ENCODE measurements at regions of chr12 and their contacts with region 1.

Region 1: GRCh38 chr12:119780786-119781434 is 96.2 kb downstream of the CIT start:
- DNase-seq: no peak
- H3K4me3 ChIP-seq: peak overlapping the region; percentile 33
- H3K27me3 ChIP-seq: no peaks in the 10 kb centered on the region
- CTCF ChIP-seq: peak; percentile 84

Region 2: GRCh38 chr12:119642986-119643385 is 137.9 kb before region 1 on chr12:
- CTCF ChIA-PET with region 1: no interaction called
- POLR2A ChIA-PET with region 1: no interaction called
- DNase-seq: no peak
- H3K4me3 ChIP-seq: no peak overlapping the region
- H3K27me3 ChIP-seq: no peaks in the 10 kb centered on the region
- CTCF ChIP-seq: no peak

Region 3: DNA sequence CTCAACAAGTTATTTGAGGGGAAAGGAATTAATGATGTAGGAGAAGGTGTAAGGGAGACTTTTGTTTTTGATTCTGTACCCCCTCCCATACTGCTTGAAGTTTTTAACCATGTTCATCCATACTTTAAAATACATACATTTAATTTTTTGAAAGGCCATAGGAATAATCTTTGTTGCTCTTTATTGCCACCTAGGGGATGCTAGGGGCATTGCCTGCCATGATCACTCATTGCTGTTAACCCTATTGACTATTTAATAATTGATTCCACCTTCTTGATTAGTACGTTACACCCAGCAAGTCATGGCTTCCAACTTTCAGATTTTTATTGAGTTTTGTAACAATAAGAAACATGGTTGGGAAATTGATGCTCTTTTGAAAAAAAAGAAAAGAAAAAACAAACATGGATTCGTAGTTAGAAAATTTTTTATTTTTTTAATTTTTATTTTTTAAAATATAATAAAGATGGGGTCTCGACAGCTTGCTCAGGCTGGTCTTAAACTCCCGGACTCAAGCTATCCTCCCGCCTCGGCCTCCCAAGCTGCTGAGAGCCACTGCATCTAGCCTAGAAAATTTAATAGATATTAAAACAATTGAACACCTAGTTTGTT is 121.5 kb before region 1 on chr12:
- CTCF ChIA-PET with region 1: interaction called, 17 read pairs
- POLR2A ChIA-PET with region 1: no interaction called
- DNase-seq: no peak
- H3K4me3 ChIP-seq: no peak overlapping the region
- H3K27me3 ChIP-seq: no peaks in the 10 kb centered on the region
- CTCF ChIP-seq: peak; percentile 92

Region 4: DNA sequence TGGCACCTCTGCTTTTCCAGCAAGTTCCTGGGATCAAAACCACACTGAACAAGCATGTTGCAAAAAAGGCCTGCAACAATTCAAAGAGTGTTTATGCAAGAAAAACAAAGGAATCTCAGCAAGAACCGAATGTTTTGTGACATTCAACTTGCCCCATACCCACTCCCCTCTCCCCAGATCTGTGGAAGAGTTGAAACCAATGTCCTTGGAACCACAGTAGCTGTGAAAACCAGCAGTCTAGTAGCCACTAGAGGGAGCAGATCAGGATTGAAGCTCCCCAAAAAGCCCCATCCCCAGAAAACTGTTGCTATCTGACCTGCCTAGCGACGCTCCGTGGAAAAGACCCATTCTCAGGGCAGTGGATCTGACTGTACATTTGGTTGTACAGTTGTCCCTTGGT is 85.9 kb before region 1 on chr12:
- CTCF ChIA-PET with region 1: interaction called, 11 read pairs
- POLR2A ChIA-PET with region 1: no interaction called
- DNase-seq: no peak
- H3K4me3 ChIP-seq: no peak overlapping the region
- H3K27me3 ChIP-seq: no peaks in the 10 kb centered on the region
- CTCF ChIP-seq: peak; percentile 69

Region 5: GRCh38 chr12:119797090-119797489 is 16.2 kb after region 1 on chr12:
- CTCF ChIA-PET with region 1: interaction called, 43 read pairs
- POLR2A ChIA-PET with region 1: no interaction called
- DNase-seq: no peak
- H3K4me3 ChIP-seq: no peak overlapping the region
- H3K27me3 ChIP-seq: no peaks in the 10 kb centered on the region
- CTCF ChIP-seq: no peak

Region 6: GRCh38 chr12:119902084-119902509 is 121.2 kb after region 1 on chr12:
- CTCF ChIA-PET with region 1: interaction called, 11 read pairs
- POLR2A ChIA-PET with region 1: no interaction called
- DNase-seq: peak; percentile 25
- H3K4me3 ChIP-seq: no peak overlapping the region
- H3K27me3 ChIP-seq: no peaks in the 10 kb centered on the region
- CTCF ChIP-seq: peak; percentile 98